Heart right ventricle (tissue), 16 donors: ENCODE measurements at regions of chr1 and their contacts with region 1.

Region 1: DNA sequence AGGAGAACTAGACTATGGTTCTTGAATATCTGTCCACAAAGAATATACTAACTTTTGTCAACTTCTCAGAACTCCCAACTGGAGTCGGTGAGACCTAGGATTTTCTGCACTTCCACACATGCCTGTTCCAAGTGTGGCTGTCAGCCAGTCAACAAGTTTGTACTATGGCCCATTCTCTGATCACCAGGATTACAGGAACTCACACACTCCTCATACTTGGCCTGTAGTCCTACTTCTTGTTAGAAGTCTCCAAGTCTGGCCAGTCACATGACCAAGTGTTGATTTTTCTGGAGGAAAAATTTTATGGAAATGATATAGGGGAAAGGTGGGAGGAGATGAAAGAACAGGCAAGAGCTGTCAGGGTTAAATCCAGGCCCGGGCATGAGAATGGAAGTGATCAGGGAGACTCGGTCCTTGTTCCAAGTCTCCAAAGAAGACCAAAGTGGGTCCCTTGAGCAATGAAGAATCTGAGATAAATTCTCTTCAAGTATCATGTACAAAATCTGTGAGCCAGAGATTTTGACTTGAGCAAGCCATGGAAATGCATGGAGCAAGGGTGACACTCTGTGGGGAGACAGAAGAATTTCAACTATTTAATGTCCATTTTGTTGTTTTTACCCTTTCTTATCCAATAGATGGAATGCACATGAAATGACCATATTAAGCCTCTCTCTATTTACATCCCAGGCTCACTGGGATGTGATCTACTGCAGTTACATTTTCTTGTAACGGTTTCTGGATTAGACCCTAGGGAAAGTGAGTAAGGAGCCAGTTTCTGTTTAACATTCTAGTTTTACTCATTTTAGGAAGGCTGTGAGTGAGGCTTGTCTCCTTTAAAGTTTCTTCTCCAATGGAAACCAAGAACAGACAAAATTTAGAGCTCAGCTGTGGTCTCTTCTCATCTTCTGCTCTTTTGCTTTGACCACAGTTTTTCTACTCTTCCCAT is 320.9 kb downstream of the ASTN1 start:
- DNase-seq: peak in 1 of 2 donors; percentile 19
- ATAC-seq: peak in 7 of 8 donors; percentile 40 to 72 (median 54)
- H3K4me3 ChIP-seq: no peak overlapping the region
- H3K27ac ChIP-seq: no peak overlapping the region
- H3K4me1 ChIP-seq: peaks cover 0 to 37% (median 5%) of the 10 kb centered on the region in 9 donors
- H3K27me3 ChIP-seq: no peaks in the 10 kb centered on the region
- CTCF ChIP-seq: peak; percentile 26 to 74 (median 61)

Region 2: GRCh38 chr1:176567190-176567794 is 276.3 kb before region 1 on chr1:
- intact Hi-C with region 1: loop called in 1 of 10 experiments (anchors 2 kb)
- DNase-seq: no peak
- ATAC-seq: no peak
- H3K4me3 ChIP-seq: no peak overlapping the region
- H3K27ac ChIP-seq: no peak overlapping the region
- H3K4me1 ChIP-seq: peaks cover 0 to 18% (median 9%) of the 10 kb centered on the region in 9 donors
- H3K27me3 ChIP-seq: no peaks in the 10 kb centered on the region
- CTCF ChIP-seq: no peak

Region 3: DNA sequence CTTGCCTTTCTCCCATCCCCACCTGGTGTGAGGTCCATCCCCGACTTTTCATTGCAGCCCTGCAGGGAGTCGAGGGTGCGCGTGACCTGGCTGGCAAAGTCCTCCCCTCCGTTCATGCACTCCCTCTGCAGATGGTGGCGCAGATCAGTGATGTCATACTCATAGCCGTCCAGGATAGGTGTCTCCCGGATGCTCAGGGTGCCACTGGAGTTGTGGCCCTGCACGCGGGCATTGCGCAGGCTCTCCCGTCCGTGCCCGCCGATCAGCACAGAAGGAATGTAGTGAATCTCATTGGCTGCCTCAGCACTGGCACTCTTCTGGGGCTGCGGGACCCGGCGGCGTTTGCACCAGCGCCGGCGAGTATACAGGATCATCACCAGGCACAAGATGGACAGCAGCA is 188.8 kb after region 1 on chr1:
- intact Hi-C with region 1: no loop called
- DNase-seq: no peak
- ATAC-seq: no peak
- H3K4me3 ChIP-seq: no peak overlapping the region
- H3K27ac ChIP-seq: no peak overlapping the region
- H3K4me1 ChIP-seq: peaks cover 0 to 4% (median 0%) of the 10 kb centered on the region in 9 donors
- H3K27me3 ChIP-seq: no peaks in the 10 kb centered on the region
- CTCF ChIP-seq: no peak